H1 (cell line): ENCODE measurements at regions of chr1 and their contacts with region 1.

Region 1: DNA sequence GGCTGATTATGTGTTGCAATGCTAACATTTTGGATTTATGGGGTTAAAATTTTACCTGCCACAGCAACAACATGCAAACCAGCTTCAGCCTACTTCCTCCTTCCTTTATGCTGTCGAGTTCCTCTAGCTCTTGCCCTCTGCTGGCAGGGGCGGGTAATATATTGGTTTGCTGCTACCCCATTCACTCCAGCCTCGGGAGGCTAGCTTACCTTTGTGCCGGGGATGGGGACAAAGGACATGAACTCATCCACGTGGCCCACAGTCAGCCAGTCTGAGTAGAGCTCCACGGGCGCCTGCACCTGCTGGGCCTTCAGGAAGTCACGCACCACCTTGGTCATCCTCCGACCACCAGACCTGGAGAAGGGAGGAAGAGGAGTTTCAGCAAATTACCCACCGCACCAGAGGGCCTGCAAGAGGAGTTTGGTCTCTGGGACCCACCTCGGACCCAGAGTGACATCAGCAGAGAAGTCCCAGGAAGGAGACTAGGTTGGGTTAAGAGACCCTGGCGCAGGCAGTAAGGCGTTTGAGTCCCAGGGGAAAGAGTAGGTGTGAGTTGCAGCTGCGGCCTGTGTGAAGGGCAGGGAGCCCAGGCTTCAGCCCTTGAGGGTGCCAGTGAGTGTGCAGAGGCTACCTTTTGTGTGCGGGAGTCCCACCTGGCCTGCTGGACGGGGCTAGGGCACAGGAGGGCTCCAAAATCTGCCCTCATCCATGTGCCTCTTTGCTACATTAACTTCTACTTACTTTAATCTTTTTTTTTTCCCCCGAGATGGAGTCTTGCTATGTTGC is 21.8 kb upstream of the SDHB start:
- DNase-seq: peak; percentile 19 to 80
- H3K4me3 ChIP-seq: no peak overlapping the region
- H3K27ac ChIP-seq: no peak overlapping the region
- H3K4me1 ChIP-seq: no peaks in the 10 kb centered on the region
- H3K27me3 ChIP-seq: no peaks in the 10 kb centered on the region
- CTCF ChIP-seq: peak; percentile 51 to 82 (median 64)
- EP300 ChIP-seq: no peak
- POLR2A ChIP-seq: 0 out of 3 replicates have a peak, but pooled peaks of 1 of the 2 experiments have one; percentile 20
- RAD21 ChIP-seq: peak; percentile 34 to 52; a peak in 3 of 4 replicates

Region 2: DNA sequence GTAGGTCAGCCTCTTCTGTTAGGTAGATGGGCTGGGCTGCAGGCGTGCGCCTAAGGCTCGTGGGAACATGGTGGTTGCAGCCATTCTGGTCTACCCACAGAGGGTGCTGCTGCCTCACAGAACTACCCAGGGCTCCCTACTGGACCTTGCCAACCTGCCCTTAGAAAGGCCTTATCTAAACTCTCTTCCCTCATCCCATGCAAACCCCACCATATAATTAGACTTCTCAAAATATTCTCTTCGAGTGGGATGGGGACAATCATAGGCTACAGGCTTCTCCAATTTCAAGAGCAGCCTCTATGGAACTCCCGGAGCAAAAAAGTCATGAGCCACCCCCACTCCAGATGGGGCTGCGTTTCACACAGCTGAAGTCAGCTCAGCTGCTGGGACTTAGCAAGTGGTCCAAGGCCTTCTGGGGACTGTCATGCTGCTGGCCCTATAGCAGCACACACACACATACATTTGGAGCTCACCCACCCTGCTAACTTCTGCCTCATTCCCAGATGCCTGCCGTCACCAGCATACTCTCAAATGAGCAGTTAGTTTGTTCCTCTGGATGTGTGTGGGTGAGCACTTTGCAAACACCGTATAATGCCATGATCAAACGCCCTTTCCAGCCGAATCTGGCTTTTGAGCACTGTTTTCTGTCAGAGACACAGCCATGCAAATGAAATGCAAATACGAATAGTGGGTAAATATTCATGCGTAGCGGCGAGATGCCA is 15.8 kb before region 1 on chr1:
- CTCF ChIA-PET with region 1: interaction called, 27 read pairs
- POLR2A ChIA-PET with region 1: no interaction called
- DNase-seq: peak; percentile 77 to 79
- H3K4me3 ChIP-seq: no peak overlapping the region
- H3K27ac ChIP-seq: no peak overlapping the region
- H3K4me1 ChIP-seq: peaks cover 4 to 9% (median 6%) of the 10 kb centered on the region in 4 experiments; a peak in 5 of 7 replicates
- H3K27me3 ChIP-seq: no peaks in the 10 kb centered on the region
- CTCF ChIP-seq: peak; percentile 90 to 94 (median 94)
- EP300 ChIP-seq: no peak
- POLR2A ChIP-seq: no peak
- RAD21 ChIP-seq: peak; percentile 95 to 97

Region 3: GRCh38 chr1:17097012-17097546 is 21.4 kb after region 1 on chr1:
- CTCF ChIA-PET with region 1: no interaction called
- POLR2A ChIA-PET with region 1: no interaction called
- DNase-seq: no peak
- H3K4me3 ChIP-seq: no peak overlapping the region
- H3K27ac ChIP-seq: no peak overlapping the region
- H3K4me1 ChIP-seq: 0 out of 7 replicates have a peak, but pooled peaks cover 0 to 2% (median under 1%) of the 10 kb centered on the region in 4 experiments
- H3K27me3 ChIP-seq: no peaks in the 10 kb centered on the region; a peak in 1 of 7 replicates
- CTCF ChIP-seq: no peak
- EP300 ChIP-seq: no peak
- POLR2A ChIP-seq: no peak
- RAD21 ChIP-seq: no peak

Region 4: DNA sequence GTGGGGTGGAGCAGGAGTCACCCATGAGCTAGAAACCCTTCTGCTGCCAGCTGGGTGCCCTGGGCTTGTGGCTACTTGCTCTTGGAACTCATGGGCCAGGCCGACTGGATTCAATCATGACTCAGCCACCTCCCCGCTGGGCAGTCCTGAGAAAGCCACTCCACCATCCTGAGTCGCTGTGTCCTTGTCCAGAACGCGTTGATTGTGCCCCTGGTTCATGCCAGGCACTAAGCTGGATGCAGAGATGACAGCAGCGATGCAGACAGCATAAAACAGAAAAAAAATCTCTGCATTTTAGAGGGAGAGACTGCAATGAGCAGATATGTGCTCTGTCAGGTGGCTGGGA is 139.9 kb after region 1 on chr1:
- CTCF ChIA-PET with region 1: no interaction called
- POLR2A ChIA-PET with region 1: no interaction called
- DNase-seq: no peak
- H3K4me3 ChIP-seq: no peak overlapping the region
- H3K27ac ChIP-seq: no peak overlapping the region
- H3K4me1 ChIP-seq: peaks cover 0 to 14% (median 5%) of the 10 kb centered on the region in 4 experiments; a peak in 6 of 7 replicates
- H3K27me3 ChIP-seq: peaks cover 0 to 3% (median 0%) of the 10 kb centered on the region in 4 experiments; a peak in 2 of 7 replicates
- CTCF ChIP-seq: no peak
- EP300 ChIP-seq: no peak
- POLR2A ChIP-seq: no peak
- RAD21 ChIP-seq: no peak